Activated naive CD8-positive, alpha-beta T cell treated with anti-CD3 and anti-CD28 coated beads, Interleukin-2, amount 10 ng/mL, durations not matched to agents 7 days and 5 days (primary cell): ENCODE measurements at regions of chr4 and their contacts with region 1.

Region 1: GRCh38 chr4:52712172-52712990 is 38.8 kb downstream of the ERVMER34-1 start:
- DNase-seq: peak; percentile 95
- ATAC-seq: peak; percentile 93
- H3K4me3 Mint-ChIP-seq: peak overlapping the region; percentile 93
- H3K27ac Mint-ChIP-seq: peak overlapping the region; percentile 94
- H3K4me1 Mint-ChIP-seq: peaks cover 35% of the 10 kb centered on the region
- H3K27me3 Mint-ChIP-seq: peaks cover 6% of the 10 kb centered on the region

Region 2: GRCh38 chr4:52659001-52659721 is 53.2 kb before region 1 on chr4 and contains the start of gene USP46:
- POLR2A ChIA-PET with region 1: interaction called, 31 read pairs
- DNase-seq: peak; percentile 67
- ATAC-seq: peak; percentile 86
- H3K4me3 Mint-ChIP-seq: peak within 1 kb of the TSS; percentile 80
- H3K27ac Mint-ChIP-seq: peak within 1 kb of the TSS; percentile 67
- H3K4me1 Mint-ChIP-seq: peaks cover 7% of the 10 kb centered on the region
- H3K27me3 Mint-ChIP-seq: peaks cover 9% of the 10 kb centered on the region
- total RNA-seq, gene USP46: 8.3 to 9.1 TPM

Region 3: GRCh38 chr4:53012738-53013137 is 300.4 kb after region 1 on chr4:
- POLR2A ChIA-PET with region 1: interaction called, 14 read pairs
- DNase-seq: no peak
- ATAC-seq: peak; percentile 97
- H3K4me3 Mint-ChIP-seq: peak overlapping the region; percentile 90
- H3K27ac Mint-ChIP-seq: peak overlapping the region; percentile 94
- H3K4me1 Mint-ChIP-seq: peaks cover 29% of the 10 kb centered on the region
- H3K27me3 Mint-ChIP-seq: no peaks in the 10 kb centered on the region